Activated CD4-positive, alpha-beta memory T cell treated with anti-CD3 and anti-CD28 coated beads, Interleukin-2, amount 10 ng/mL, durations not matched to agents 7 days and 5 days (primary cell): ENCODE measurements at regions of chr1 and their contacts with region 1.

Region 1: GRCh38 chr1:119808972-119809550 is 2.2 kb downstream of the REG4 start:
- DNase-seq: peak; percentile 77
- H3K4me3 Mint-ChIP-seq: no peak overlapping the region
- H3K27ac Mint-ChIP-seq: no peak overlapping the region
- H3K4me1 Mint-ChIP-seq: peaks cover 3% of the 10 kb centered on the region
- H3K27me3 Mint-ChIP-seq: peaks cover 65% of the 10 kb centered on the region

Region 2: DNA sequence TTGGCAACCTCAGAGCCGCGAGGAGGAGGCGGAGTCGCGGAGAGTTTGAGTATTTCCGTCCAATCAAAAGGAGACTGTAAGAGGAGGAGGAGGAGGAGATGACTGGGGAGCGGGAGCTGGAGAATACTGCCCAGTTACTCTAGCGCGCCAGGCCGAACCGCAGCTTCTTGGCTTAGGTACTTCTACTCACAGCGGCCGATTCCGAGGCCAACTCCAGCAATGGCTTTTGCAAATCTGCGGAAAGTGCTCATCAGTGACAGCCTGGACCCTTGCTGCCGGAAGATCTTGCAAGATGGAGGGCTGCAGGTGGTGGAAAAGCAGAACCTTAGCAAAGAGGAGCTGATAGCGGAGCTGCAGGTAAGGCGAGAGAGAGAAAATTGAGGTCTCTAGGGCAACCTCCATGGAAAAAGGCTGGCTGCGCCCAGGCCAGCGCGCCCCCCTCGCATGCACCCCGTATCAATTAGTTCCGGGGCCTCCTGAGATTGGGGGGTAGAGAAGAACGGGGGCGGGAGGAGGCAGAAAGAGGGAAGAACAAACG is 97.2 kb before region 1 on chr1 and contains the start of gene PHGDH:
- CTCF ChIA-PET with region 1: no interaction called
- POLR2A ChIA-PET with region 1: no interaction called
- DNase-seq: peak; percentile 70
- H3K4me3 Mint-ChIP-seq: peak within 1 kb of the TSS; percentile 88
- H3K27ac Mint-ChIP-seq: peak within 1 kb of the TSS; percentile 77
- H3K4me1 Mint-ChIP-seq: peaks cover 31% of the 10 kb centered on the region
- H3K27me3 Mint-ChIP-seq: peaks cover 37% of the 10 kb centered on the region
- total RNA-seq, gene PHGDH: 132 to 143 TPM

Region 3: GRCh38 chr1:119743781-119744597 is 65.1 kb before region 1 on chr1:
- CTCF ChIA-PET with region 1: interaction called, 34 read pairs
- POLR2A ChIA-PET with region 1: no interaction called
- DNase-seq: peak; percentile 60
- H3K4me3 Mint-ChIP-seq: no peak overlapping the region
- H3K27ac Mint-ChIP-seq: no peak overlapping the region
- H3K4me1 Mint-ChIP-seq: peaks cover 6% of the 10 kb centered on the region
- H3K27me3 Mint-ChIP-seq: peaks cover 6% of the 10 kb centered on the region

Region 4: DNA sequence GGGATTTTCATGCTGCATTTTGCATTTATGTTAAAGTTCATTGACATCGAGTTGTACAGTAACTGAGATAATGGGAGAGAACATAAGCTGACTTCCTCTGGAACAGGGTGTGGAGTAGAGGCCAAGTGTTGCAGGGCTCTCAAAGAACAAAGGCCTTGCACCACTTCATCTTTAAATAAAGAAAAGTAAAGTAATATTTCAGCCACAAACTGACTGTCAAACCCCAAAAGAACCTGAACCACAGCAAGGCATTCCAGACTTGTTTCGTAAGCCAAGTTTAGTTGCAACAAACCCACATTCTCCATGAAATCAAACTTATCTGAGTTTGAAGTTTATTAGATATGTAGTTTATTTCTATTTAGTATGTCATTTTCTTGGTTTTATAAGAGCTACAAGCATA is 21.3 kb before region 1 on chr1:
- CTCF ChIA-PET with region 1: interaction called, 14 read pairs
- POLR2A ChIA-PET with region 1: no interaction called
- DNase-seq: no peak
- H3K4me3 Mint-ChIP-seq: no peak overlapping the region
- H3K27ac Mint-ChIP-seq: no peak overlapping the region
- H3K4me1 Mint-ChIP-seq: peaks cover 30% of the 10 kb centered on the region
- H3K27me3 Mint-ChIP-seq: peaks cover 51% of the 10 kb centered on the region

Region 5: DNA sequence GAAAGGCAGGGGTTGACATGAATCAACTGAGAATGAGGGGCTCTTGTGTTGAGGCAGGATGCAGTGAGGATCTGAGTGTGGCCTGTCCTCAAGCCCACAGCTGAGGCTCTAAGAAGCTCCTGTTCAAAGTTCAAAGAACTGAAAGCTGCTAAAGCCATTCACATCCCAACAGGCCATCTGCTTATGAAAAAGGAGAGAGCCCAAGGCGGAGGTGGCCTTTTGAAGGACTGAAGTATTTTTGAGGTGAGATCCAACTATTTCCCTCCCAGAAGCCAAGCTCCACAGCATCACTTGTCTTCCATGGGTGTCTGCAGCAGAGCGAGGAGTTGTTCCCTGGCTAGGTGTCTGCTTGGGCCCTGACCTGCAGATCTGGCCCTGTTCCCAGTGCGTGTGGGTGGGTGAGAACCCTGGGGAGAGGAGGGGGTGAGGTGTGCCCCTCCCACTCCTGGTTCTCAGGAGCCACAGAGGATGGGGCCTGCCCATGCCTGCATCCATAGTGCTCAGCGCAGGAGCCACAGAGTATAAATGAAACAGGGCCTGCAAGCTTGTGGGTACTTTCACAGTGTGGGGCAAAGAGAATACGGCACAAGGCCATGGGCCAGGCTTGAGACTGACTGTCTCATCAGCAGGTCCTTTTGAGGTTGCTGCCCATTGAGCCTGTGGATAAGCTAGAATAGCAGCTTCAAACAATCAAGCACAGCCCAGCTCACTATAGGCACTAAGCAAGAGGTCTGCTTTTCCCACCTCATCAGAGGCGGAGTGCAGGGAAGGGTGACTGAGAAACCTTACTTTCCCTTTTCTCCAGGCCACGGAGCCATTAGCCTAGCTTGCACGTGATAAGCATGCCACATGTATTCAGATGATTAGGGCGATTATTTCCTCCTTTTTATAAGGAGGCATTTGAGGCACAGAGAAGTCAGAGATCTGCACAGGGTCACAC is 13.5 kb before region 1 on chr1:
- CTCF ChIA-PET with region 1: interaction called, 11 read pairs
- POLR2A ChIA-PET with region 1: no interaction called
- DNase-seq: no peak
- H3K4me3 Mint-ChIP-seq: no peak overlapping the region
- H3K27ac Mint-ChIP-seq: no peak overlapping the region
- H3K4me1 Mint-ChIP-seq: no peaks in the 10 kb centered on the region
- H3K27me3 Mint-ChIP-seq: peaks cover 20% of the 10 kb centered on the region

Region 6: GRCh38 chr1:119838236-119838635 is 29.2 kb after region 1 on chr1:
- CTCF ChIA-PET with region 1: no interaction called
- POLR2A ChIA-PET with region 1: no interaction called
- DNase-seq: no peak
- H3K4me3 Mint-ChIP-seq: no peak overlapping the region
- H3K27ac Mint-ChIP-seq: no peak overlapping the region
- H3K4me1 Mint-ChIP-seq: no peaks in the 10 kb centered on the region
- H3K27me3 Mint-ChIP-seq: peaks cover 38% of the 10 kb centered on the region

Region 7: GRCh38 chr1:119898981-119899720 is 90.1 kb after region 1 on chr1:
- CTCF ChIA-PET with region 1: no interaction called
- POLR2A ChIA-PET with region 1: no interaction called
- DNase-seq: no peak
- H3K4me3 Mint-ChIP-seq: no peak overlapping the region
- H3K27ac Mint-ChIP-seq: no peak overlapping the region
- H3K4me1 Mint-ChIP-seq: peaks cover 11% of the 10 kb centered on the region
- H3K27me3 Mint-ChIP-seq: peaks cover 45% of the 10 kb centered on the region